ENCODE measurements at regions of chr12 and their contacts with region 1.

Region 1: GRCh38 chr12:2890388-2891239 is at the start of gene TULP3:
- DNase-seq: peak; percentile 94 to 97 (median 96)
- ATAC-seq: peak; percentile 98
- H3K4me3 ChIP-seq: peak within 1 kb of the TSS; percentile 67
- H3K27ac ChIP-seq: peak within 1 kb of the TSS; percentile 76
- H3K4me1 ChIP-seq: peaks cover 5 to 15% of the 10 kb centered on the region in 2 experiments; a peak in 3 of 5 replicates
- H3K27me3 ChIP-seq: no peaks in the 10 kb centered on the region
- CTCF ChIP-seq: no peak
- EP300 ChIP-seq: no peak
- POLR2A ChIP-seq: peak; percentile 71
- RAD21 ChIP-seq: no peak
- polyA plus RNA-seq, gene TULP3: 3.6 to 8.8 TPM

Region 2: DNA sequence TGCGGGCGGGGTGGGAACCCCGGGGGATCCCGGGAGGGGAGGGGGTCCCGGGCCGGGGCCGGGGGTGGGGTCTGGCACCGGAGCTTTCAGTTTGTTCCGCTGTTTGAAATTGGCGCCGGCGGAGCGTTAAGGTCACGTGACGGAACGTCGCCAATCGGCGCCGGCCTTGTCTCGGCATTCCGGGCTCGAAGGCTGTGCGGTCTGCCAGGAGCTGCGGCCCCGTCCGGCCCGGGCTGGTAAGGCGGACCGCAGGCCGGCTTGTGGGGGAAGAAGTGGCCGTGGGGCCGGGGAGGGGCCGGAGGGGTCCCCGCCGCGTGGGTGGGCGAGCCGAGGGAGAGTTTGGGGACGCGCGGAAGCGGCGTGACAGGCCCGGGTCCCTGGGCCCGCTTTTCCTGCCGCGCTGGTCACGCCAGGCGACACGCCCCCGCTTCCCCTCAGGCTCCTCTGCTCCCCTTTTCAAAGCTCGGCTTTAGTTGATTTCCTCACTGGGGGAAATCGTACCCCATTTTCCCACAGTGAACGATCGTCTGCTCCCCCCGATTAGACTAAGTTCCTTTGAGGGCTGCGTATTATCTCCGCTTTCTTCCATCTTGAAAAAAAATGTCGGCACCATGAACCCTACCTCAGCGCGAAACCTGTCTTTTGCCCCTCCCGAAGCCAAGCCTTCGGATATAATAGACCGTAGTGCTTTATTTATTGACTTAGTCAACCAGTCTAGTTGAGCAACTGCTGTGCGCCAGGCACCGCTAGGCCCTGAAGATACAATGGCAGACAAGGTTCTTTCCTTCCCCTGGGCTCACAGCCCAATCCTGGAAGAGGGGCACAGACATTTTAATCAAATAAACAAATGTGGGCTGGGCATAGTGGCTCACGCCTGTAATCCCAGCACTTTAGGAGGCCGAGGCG is 13.3 kb before region 1 on chr12 and contains the starts of genes FOXM1 and RHNO1:
- CTCF ChIA-PET with region 1: no interaction called
- POLR2A ChIA-PET with region 1: interaction called, 13 read pairs
- in situ Hi-C with region 1: no loop called
- intact Hi-C with region 1: no loop called
- DNase-seq: peak; percentile 84 to 88 (median 85)
- ATAC-seq: peak; percentile 89
- H3K4me3 ChIP-seq: peak within 1 kb of the TSS; percentile 92
- H3K27ac ChIP-seq: peak within 1 kb of the TSS; percentile 85
- H3K4me1 ChIP-seq: peaks cover 7 to 12% of the 10 kb centered on the region in 2 experiments; a peak in 4 of 5 replicates
- H3K27me3 ChIP-seq: no peaks in the 10 kb centered on the region
- CTCF ChIP-seq: no peak
- EP300 ChIP-seq: no peak
- POLR2A ChIP-seq: peak; percentile 79
- RAD21 ChIP-seq: no peak
- polyA plus RNA-seq, gene FOXM1: 8.9 to 9.5 TPM
- polyA plus RNA-seq, gene RHNO1: 20.8 to 30.7 TPM

Region 3: DNA sequence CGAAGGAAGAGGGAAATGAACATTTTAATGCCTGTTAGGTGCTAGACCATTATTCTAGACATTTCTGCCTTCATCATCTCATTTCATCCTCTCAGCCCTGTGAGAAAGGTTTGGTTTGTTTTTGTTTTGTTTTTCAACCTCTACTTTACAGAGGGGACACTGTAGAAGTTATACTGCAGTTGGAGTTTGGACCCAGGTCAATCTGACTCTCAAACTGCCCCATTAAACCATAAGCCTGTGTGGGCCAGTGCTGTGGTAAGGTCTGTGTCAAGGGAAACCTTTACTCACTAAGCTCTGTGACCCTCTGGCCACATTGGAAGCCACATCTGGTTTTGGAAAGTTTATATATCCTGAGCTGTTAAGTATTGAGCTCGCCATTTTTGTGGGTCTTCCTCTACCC is 77.0 kb after region 1 on chr12:
- CTCF ChIA-PET with region 1: no interaction called
- POLR2A ChIA-PET with region 1: no interaction called
- in situ Hi-C with region 1: no loop called
- intact Hi-C with region 1: no loop called
- DNase-seq: no peak
- ATAC-seq: no peak
- H3K4me3 ChIP-seq: no peak overlapping the region
- H3K27ac ChIP-seq: no peak overlapping the region
- H3K4me1 ChIP-seq: peaks cover 9 to 19% of the 10 kb centered on the region in 2 experiments; a peak in 4 of 5 replicates
- H3K27me3 ChIP-seq: no peaks in the 10 kb centered on the region
- CTCF ChIP-seq: no peak
- EP300 ChIP-seq: no peak
- POLR2A ChIP-seq: no peak
- RAD21 ChIP-seq: no peak

Region 4: DNA sequence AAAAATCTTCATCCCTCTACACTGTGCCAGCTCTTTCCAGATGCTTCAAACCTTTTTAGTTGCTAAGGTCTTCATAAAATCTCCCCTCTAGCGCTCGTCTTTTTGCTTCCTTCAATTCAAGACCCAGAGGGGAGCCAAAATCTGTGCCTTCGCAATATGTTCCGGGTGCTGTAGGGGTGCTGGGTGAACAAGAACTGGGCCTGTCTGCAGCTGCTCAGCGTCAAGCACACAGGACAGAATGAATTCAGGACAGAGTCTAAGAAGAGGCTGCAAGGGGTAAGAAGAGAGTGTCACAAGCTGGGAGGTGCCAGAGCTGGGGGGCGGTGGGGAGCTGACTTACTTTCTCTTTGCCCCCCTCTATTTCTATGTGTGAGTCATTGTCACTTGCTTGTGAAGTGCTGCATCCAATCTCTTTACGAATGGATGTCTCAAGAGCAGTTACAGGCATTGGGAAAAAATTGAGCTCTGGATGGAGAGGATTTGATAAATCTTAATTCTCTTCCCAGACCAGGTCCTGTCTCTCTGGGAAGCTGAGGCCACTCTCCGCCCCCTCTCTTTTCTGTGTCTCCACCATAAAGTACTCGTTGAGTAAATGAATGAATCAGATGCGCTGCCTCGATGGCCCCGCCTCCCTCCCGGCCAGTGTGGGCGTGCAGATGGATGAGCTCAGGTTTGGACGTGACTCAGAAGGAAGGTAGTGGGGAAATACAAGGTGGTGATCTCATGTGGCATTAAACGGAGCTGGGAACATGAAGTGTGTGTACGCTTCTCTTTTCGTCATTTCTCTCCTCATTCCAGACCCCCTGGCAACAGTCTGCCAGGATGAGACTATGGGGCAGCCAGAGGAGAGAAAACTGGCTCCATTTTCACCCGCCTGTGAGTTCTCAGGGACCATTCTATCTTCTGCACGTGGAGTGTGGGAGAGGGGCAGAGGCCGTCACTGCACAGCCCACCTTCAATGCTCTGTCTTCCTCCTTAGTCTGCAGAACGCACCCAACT is 277.9 kb after region 1 on chr12:
- CTCF ChIA-PET with region 1: no interaction called
- POLR2A ChIA-PET with region 1: no interaction called
- in situ Hi-C with region 1: no loop called
- intact Hi-C with region 1: no loop called
- DNase-seq: peak in 3 of 4 experiments; percentile 11 to 21 (median 16)
- ATAC-seq: no peak
- H3K4me3 ChIP-seq: no peak overlapping the region
- H3K27ac ChIP-seq: no peak overlapping the region
- H3K4me1 ChIP-seq: no peaks in the 10 kb centered on the region
- H3K27me3 ChIP-seq: peaks cover 10 to 34% of the 10 kb centered on the region in 2 experiments; a peak in 3 of 5 replicates
- CTCF ChIP-seq: no peak
- EP300 ChIP-seq: no peak
- POLR2A ChIP-seq: no peak
- RAD21 ChIP-seq: no peak

Measured in K562 (cell line).